GM10248 (cell line): ENCODE measurements at regions of chr1 and their contacts with region 1.

Region 1: DNA sequence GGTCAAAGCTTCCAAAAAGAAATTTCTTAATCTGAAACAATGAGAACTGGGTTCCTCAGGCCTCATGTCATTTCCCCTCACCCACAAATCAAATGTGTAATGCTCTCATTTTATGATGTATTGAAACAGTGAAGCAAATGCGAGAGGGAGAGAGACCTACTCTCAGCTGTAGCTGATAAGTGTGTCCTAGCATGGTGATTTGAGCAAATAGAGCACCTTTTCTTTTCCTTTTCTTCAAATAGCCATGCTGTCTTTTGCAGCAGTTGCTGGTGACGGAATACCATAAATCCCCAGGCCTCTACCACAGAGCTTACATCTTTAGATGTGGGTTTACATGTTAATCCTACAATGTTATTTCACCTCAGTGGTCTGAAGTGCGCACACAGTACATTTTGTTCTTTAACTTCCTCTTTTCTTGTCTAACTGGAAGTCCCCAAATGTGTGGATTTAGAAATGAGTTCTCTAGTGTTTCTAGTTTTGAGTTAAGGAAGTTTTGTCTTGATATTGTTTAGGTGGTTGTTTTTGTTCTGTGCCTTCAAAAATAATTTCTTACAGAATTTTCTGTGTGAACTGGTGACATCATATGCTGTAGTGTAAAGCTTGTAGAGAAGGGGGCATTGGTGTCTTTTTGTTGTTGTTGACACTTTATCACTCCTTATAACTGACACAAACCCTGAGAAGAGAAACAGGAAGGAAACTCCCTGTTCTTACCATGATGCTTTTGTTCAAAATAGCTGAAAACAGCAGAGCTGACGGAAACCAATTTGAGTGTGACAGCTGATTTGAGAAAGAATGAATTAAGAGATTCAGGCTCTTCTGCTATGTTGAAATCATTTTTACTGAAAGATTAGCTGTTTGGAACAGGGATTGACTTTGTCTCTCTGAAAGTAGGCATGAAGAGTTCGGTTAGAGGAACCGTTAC is 12.2 kb downstream of the SMAP2 start:
- DNase-seq: peak; percentile 52
- CTCF ChIP-seq: no peak

Region 2: DNA sequence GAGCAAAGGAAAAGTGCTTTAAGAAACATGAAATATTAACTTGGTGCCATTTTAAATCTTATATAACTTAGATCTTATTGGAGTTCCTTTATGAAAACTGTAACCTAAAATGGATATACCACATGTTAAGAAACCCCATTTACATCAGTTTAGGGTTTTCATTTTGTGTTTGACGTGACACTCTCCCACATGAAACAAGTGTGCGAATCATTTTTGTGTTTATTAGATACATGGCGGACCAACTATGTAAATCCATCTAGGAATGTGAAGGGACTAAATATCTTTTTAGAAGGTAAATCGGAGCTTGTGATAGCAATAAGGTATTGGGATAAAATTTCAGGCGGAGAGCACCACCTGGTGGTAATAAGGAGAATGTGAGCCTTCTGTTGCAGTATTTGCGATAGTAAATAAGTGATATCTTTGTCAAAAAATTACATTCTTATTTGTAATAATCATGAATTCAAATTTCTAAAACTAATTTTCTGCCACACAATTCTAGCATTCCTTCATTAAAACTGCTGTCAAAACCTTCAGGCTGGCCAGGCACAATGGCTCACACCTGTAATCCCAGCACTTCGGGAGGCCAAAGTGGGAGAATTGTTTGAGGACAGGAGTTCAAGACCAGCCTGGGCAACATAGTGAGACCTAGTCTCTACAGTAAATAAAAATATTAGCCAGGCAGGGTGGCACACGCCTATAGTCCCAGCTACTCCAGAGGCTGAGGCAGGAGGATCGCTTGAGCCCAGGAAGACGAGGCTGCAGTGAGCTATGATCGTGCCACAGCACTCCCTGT is 19.2 kb after region 1 on chr1:
- CTCF ChIA-PET with region 1: interaction called, 62 read pairs
- POLR2A ChIA-PET with region 1: interaction called, 11 read pairs
- DNase-seq: no peak
- CTCF ChIP-seq: peak; percentile 69

Region 3: DNA sequence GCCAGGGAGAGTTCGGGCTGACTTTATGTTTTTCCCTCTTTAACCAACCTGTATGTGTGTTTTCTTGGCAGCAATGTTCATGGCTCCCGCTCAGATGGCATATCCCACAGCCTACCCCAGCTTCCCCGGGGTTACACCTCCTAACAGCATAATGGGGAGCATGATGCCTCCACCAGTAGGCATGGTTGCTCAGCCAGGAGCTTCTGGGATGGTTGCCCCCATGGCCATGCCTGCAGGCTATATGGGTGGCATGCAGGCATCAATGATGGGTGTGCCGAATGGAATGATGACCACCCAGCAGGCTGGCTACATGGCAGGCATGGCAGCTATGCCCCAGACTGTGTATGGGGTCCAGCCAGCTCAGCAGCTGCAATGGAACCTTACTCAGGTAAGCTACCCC is 31.0 kb after region 1 on chr1:
- CTCF ChIA-PET with region 1: no interaction called
- POLR2A ChIA-PET with region 1: no interaction called
- DNase-seq: no peak
- CTCF ChIP-seq: no peak